Activated T-helper 1 cell treated with anti-CD3 and anti-CD28 coated beads, Interleukin-12 subunit alpha, Interleukin-12 subunit beta, Interleukin-2, Interleukin-4 antibody, amounts not matched to agents 30 ng/mL and 10 ng/mL and 1 ng/mL, durations not matched to agents 14 hours and 24 hours and 36 hours (primary cell): ENCODE measurements at regions of chr19 and their contacts with region 1.

Region 1: DNA sequence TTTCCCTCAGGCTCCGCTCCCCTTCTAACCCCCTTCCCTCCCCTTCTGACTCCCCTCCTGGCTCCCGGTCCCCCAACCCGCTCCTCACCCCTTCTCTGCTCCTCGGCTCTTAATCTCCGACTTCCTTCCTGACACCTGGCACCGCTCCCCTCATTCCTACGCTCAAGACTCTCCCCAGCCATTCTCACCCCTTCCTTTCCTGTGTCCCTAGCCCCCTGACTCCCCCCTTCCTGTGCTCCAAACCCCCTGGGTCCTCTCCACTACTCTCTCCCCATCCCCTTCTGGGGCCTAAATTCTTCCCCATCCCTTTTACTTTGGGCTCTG is 658 bp downstream of the CLPP start:
- DNase-seq: no peak
- H3K4me3 Mint-ChIP-seq: peak overlapping the region; percentile 98
- H3K27ac Mint-ChIP-seq: peak overlapping the region; percentile 96
- H3K4me1 Mint-ChIP-seq: peaks cover 13% of the 10 kb centered on the region
- H3K27me3 Mint-ChIP-seq: no peaks in the 10 kb centered on the region

Region 2: GRCh38 chr19:6110360-6110977 is 251.5 kb before region 1 on chr19 and contains the start of gene RFX2:
- intact Hi-C with region 1: loop called (anchors 1 kb)
- DNase-seq: peak; percentile 99
- H3K4me3 Mint-ChIP-seq: peak within 1 kb of the TSS; percentile 86
- H3K27ac Mint-ChIP-seq: peak within 1 kb of the TSS; percentile 79
- H3K4me1 Mint-ChIP-seq: peaks cover 27% of the 10 kb centered on the region
- H3K27me3 Mint-ChIP-seq: peaks cover 17% of the 10 kb centered on the region
- total RNA-seq, gene RFX2: 9.2 and 10.2 TPM in 2 replicates

Region 3: DNA sequence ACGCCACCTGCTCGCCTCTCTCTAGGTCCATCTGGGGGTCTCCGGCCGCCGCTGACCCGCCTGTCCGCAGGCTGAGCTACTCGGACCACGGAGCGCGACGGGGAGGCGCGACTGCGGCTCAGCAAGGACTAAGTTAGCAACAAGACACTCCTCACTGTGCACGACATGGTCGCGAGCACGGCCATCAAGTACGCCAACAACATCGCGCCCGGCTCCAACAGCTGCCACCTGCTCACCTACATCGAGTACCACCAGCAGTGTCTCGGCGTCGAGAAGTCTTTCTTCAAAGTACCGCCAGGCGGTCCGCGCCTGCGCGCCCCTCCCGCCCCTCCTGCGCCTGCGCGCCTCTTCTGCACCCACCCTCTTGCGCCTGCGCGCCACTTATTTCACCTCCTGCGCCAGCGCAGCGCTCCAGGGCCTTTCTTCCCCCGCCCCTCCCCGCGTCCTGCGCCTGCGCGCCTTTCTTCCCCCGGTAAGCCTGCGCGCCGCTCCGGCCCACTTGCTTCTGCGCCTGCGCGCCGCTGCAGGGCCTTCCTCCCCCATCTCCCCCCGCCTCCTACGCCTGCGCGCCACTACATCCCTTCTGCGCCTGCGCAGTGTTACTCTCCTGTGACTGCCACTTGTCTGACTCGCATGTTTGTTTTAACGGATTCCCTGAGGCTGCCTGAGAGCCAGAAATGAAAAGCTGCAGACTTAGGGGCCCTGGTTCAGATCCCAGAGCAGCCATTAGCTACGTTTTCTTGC is 162.6 kb before region 1 on chr19:
- intact Hi-C with region 1: loop called (anchors 1 kb)
- DNase-seq: peak; percentile 99
- H3K4me3 Mint-ChIP-seq: peak overlapping the region; percentile 99
- H3K27ac Mint-ChIP-seq: peak overlapping the region; percentile 94
- H3K4me1 Mint-ChIP-seq: peaks cover 22% of the 10 kb centered on the region
- H3K27me3 Mint-ChIP-seq: peaks cover 2% of the 10 kb centered on the region

Region 4: DNA sequence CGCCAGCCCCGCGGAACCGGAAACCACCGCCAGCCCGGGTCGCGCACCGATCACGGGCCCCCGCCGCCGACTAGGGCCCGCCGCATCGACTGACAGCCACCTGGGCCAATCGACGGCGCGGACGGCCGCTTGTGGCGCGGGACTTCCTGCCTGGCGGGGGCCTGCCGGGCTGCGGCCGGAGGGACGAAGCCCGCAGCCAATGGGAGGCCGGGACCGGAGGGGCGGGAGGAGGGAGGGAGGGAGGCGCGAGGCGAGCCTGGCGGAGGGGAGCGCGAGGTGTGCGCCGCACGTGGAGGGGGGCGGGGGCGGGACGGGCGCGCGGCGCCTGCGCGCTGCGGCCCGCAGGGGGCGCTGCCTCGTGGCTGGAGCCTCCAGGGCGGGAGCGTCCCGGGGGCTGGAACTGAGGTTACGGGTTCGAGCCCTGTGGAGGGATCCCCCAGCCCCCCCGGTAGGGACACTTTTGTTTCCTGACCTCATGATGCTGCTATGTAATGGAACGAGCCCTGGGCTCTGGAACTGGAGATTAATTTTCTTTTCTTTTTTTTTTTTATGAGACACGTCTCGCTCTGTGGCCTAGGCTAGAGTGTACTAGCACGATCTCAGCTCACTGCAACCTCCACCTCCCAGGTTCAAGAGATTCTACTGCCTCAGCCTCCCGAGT is 81.9 kb before region 1 on chr19 and contains the start of gene MLLT1:
- intact Hi-C with region 1: loop called (anchors 1 kb)
- DNase-seq: peak; percentile 96
- H3K4me3 Mint-ChIP-seq: peak within 1 kb of the TSS; percentile 95
- H3K27ac Mint-ChIP-seq: peak within 1 kb of the TSS; percentile 90
- H3K4me1 Mint-ChIP-seq: peaks cover 26% of the 10 kb centered on the region
- H3K27me3 Mint-ChIP-seq: no peaks in the 10 kb centered on the region
- total RNA-seq, gene MLLT1: 71.6 and 77.4 TPM in 2 replicates

Region 5: DNA sequence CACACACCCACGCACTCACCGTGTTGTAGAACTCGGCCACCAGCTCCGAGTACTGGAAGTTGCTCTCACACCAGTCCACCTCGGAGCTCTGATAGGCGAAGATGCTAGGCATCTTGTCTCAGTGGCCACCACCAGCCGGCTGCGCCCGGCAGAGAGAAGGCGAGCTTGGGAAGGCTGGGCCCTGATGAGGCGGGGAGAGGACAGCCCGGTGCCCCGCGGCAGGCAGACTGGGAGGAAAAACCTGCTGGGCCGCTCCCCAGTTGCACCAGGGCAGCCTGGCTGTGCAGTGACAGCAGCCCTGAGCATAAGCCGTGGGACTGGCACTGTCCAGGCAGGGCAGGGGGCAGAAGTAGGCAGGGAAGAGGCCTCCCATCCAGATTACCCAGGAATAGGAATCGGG is 28.5 kb before region 1 on chr19 and contains the start of gene ACER1:
- intact Hi-C with region 1: no loop called
- DNase-seq: no peak
- H3K4me3 Mint-ChIP-seq: no peak within 1 kb of the TSS
- H3K27ac Mint-ChIP-seq: no peak within 1 kb of the TSS
- H3K4me1 Mint-ChIP-seq: no peaks in the 10 kb centered on the region
- H3K27me3 Mint-ChIP-seq: peaks cover 1% of the 10 kb centered on the region
- total RNA-seq, gene ACER1: 0.24 TPM in 1 of 2 replicates, not detected in the other

Region 6: DNA sequence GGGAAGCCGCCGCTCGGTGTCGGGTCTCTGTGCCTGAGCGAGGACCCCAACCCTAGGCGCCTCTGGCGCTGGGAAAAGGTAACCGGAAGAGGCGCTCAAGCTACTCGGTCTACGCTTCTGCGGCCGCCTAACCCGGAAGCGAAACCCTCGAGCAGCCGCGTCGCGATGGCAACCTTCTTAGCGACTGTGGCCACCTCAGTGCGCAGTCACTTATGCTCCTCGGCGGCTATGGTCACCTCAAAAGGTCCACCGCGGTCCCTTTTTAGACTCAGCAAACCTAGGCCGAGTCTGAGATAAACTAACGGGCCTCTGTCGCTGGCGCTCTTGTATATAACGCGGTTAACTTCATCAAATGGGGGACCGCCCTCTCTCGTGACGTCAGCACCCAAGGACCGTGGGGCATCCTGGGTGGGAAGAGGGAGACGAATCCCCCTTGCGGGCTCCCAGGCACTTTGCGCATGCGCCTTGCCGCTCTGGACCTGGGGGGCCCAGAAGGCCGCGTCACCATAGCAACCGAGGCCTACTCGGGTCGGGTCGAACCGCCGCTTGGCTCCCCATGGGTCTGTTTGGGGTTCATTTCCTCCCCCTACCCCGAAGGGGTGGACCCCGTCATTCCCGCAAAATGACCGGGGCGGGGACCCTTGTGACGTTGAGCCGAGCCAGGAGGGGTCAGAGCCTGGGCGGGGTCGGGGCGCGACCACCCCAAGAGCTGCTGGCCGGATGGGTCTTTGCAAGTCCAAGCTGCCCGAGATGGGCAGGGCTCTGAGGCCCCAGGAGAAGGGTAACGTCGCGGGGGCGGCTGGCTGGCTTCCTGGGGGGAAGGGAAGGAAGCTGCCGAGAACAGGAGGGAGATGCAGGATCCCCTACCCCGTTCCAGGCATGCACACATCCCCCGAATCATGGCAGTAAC is 31.3 kb after region 1 on chr19 and contains the start of gene GTF2F1:
- intact Hi-C with region 1: loop called (anchors 1 kb)
- DNase-seq: peak; percentile 87
- H3K4me3 Mint-ChIP-seq: peak within 1 kb of the TSS; percentile 98
- H3K27ac Mint-ChIP-seq: peak within 1 kb of the TSS; percentile 97
- H3K4me1 Mint-ChIP-seq: peaks cover 29% of the 10 kb centered on the region
- H3K27me3 Mint-ChIP-seq: no peaks in the 10 kb centered on the region
- total RNA-seq, gene GTF2F1: 62.9 and 65.5 TPM in 2 replicates

Region 7: DNA sequence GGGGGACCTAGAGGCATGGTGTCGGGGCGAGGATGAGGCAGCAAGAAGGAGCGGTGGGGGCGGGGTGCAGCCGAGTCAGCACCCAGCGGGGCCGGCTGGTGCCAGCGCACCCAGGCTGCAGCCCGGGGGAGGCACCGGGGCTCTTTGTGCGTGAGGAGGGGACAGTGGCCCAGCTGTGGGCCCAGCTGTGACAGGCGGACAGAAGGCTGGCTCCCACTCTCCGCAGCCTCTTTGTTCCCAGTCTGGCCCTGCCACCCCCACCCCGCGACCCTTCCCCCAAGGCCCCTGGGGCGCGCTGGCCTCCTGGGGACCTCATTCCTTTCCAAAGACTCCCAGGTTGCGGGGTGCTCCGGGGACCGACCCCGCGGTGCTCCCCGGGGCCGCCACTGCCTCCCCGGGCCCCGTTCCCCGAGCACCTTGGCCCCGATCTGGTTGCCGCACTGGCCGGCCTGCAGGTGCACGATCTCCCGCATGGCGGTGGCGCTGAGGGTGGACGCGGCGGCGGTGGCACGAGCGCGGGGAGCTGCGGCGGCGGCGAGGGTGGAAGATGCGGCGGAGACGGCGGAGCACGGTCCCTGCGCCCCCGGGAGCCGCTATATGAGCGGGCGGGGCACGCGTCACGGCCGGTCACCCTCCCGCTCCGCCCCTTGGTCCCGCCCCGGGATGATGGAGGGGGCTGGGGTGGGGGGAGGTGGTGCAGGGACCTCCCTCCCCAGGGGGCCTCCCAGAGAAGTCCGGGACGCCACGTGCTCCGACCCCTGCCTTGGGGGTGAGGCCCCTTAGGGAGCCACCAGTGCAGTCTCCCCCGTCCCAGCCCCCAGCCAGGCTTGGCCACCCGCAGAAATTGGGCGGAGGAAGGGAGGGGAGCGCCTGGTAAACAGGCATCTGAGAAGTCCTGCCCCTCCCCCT is 140.0 kb after region 1 on chr19 and contains the start of gene TUBB4A:
- intact Hi-C with region 1: loop called (anchors 2 kb)
- DNase-seq: peak; percentile 31
- H3K4me3 Mint-ChIP-seq: peak within 1 kb of the TSS; percentile 82
- H3K27ac Mint-ChIP-seq: no peak within 1 kb of the TSS
- H3K4me1 Mint-ChIP-seq: peaks cover 21% of the 10 kb centered on the region
- H3K27me3 Mint-ChIP-seq: peaks cover 18% of the 10 kb centered on the region
- total RNA-seq, gene TUBB4A: 2.3 and 3.0 TPM in 2 replicates